Body of pancreas (tissue), 4 donors: ENCODE measurements at regions of chr1 and their contacts with region 1.

Region 1: GRCh38 chr1:151309811-151310323 is 17.3 kb downstream of the PI4KB start:
- DNase-seq: peak in 1 of 4 donors; percentile 39
- ATAC-seq: no peak
- H3K4me3 ChIP-seq: no peak overlapping the region
- H3K27ac ChIP-seq: peak overlapping the region in 1 of 4 donors; percentile 21
- H3K4me1 ChIP-seq: peaks cover 39% of the 10 kb centered on the region
- H3K27me3 ChIP-seq: no peaks in the 10 kb centered on the region
- CTCF ChIP-seq: no peak
- POLR2A ChIP-seq: no peak

Region 2: GRCh38 chr1:151356696-151357095 is 46.8 kb after region 1 on chr1:
- intact Hi-C with region 1: loop called (anchors 5 kb)
- DNase-seq: no peak
- ATAC-seq: no peak
- H3K4me3 ChIP-seq: no peak overlapping the region
- H3K27ac ChIP-seq: no peak overlapping the region
- H3K4me1 ChIP-seq: no peaks in the 10 kb centered on the region
- H3K27me3 ChIP-seq: no peaks in the 10 kb centered on the region
- CTCF ChIP-seq: no peak
- POLR2A ChIP-seq: no peak

Region 3: DNA sequence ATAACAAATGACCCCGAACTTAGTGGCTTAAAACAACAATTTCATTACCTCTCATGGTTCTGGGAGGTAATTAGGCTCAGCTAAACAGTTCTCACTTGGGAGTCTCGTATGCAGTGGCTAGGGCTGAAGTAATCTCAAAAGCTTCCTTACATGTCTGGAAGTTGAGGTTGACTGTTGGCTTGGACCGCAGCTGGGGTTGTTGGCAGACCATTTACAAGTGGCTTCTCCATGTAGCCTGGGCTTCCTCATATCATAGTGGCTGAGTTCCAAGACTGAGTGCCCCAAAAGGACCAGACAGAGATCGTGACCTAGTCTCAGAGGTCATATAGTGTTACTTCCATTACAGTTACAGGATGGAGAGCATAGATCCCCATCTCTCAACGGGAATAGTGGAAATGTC is 151.8 kb after region 1 on chr1:
- intact Hi-C with region 1: no loop called
- DNase-seq: no peak
- ATAC-seq: no peak
- H3K4me3 ChIP-seq: no peak overlapping the region
- H3K27ac ChIP-seq: no peak overlapping the region
- H3K4me1 ChIP-seq: peaks cover 13% of the 10 kb centered on the region
- H3K27me3 ChIP-seq: no peaks in the 10 kb centered on the region
- CTCF ChIP-seq: no peak
- POLR2A ChIP-seq: no peak